Caco-2 (cell line): ENCODE measurements at regions of chr6 and their contacts with region 1.

Region 1: GRCh38 chr6:125220712-125221111 is 67.1 kb downstream of the TPD52L1 start:
- DNase-seq: no peak
- H3K4me3 ChIP-seq: peak overlapping the region; percentile 4
- H3K4me3 Mint-ChIP-seq: peak overlapping the region; percentile 25
- H3K27ac Mint-ChIP-seq: no peak overlapping the region
- H3K4me1 ChIP-seq: peaks cover 24% of the 10 kb centered on the region
- H3K4me1 Mint-ChIP-seq: peaks cover 30% of the 10 kb centered on the region
- H3K27me3 ChIP-seq: no peaks in the 10 kb centered on the region
- H3K27me3 Mint-ChIP-seq: no peaks in the 10 kb centered on the region
- CTCF ChIP-seq: no peak

Region 2: GRCh38 chr6:124984668-124985338 is 235.9 kb before region 1 on chr6:
- CTCF ChIA-PET with region 1: no interaction called
- POLR2A ChIA-PET with region 1: no interaction called
- intact Hi-C with region 1: no loop called
- DNase-seq: no peak
- H3K4me3 ChIP-seq: no peak overlapping the region
- H3K4me3 Mint-ChIP-seq: no peak overlapping the region
- H3K27ac Mint-ChIP-seq: no peak overlapping the region
- H3K4me1 ChIP-seq: no peaks in the 10 kb centered on the region
- H3K4me1 Mint-ChIP-seq: no peaks in the 10 kb centered on the region
- H3K27me3 ChIP-seq: no peaks in the 10 kb centered on the region
- H3K27me3 Mint-ChIP-seq: no peaks in the 10 kb centered on the region
- CTCF ChIP-seq: no peak

Region 3: DNA sequence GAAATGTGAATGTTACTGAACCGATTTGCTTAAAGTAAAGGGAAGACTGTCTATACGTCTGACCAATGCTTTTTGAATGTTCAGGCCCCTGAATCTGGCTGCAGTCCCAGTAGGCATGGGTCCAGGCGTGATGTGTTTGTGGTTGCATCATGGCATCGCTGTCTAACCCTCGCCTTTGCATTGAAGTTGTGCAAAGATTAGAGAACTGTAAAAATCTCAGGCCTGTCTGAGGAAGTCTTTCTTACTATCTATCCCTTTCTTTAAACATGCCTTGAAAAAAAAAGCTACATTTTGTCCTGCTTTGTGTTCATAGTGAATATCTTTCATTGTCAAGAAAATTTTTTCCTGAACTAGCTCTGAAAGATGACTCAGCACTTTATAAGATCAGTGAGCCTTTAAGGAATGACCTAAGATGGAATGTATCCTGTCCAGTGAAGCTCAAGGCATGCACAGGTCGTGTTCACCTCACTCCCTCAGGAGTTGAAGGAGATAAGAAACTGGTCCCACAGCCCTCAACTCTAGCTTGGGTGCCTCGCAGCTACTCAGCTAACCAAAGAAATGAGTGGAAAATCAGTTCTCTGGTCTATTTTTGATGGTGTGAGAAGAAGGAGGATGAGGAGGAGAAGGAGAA is 18.6 kb before region 1 on chr6:
- CTCF ChIA-PET with region 1: no interaction called
- POLR2A ChIA-PET with region 1: interaction called, 3 read pairs
- intact Hi-C with region 1: loop called (anchors 1 kb)
- DNase-seq: peak; percentile 59 to 81
- H3K4me3 ChIP-seq: no peak overlapping the region
- H3K4me3 Mint-ChIP-seq: peak overlapping the region; percentile 25
- H3K27ac Mint-ChIP-seq: peak overlapping the region; percentile 55
- H3K4me1 ChIP-seq: peaks cover 36% of the 10 kb centered on the region
- H3K4me1 Mint-ChIP-seq: peaks cover 25% of the 10 kb centered on the region
- H3K27me3 ChIP-seq: no peaks in the 10 kb centered on the region
- H3K27me3 Mint-ChIP-seq: no peaks in the 10 kb centered on the region
- CTCF ChIP-seq: no peak

Region 4: DNA sequence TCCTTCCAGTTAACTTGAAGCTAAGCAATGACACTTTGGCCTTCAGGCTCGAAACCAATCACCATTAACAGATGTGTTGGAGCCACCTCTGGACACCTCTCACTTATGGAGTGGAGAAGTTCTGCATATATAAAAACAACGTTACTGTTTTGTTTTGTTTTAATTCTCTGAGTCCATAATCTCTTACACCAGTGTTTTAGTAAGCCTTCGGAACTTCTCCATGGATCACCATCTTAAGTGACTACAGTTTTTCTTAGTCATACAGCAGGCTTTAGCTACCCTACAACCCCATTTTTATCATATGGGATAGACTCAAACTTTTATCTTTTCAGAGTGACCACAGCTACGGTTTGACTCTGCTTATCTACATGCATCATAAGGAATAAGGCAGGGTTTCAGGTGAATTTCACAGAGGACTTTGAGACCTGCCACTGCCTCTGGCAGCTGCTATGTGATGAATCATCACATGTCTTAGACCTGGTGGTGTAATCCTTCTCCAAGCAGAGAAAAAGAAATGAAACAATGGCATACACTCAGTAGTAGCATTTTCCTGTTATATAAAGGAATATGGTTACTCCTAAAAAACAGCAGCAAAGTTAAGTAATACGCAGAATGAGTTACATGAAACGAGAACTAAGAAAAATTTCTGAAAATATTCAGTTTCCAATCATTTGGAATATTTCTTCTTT is 86.6 kb after region 1 on chr6:
- CTCF ChIA-PET with region 1: no interaction called
- POLR2A ChIA-PET with region 1: no interaction called
- intact Hi-C with region 1: loop called (anchors 5 kb)
- DNase-seq: peak; percentile 61 to 69
- H3K4me3 ChIP-seq: no peak overlapping the region
- H3K4me3 Mint-ChIP-seq: peak overlapping the region; percentile 28
- H3K27ac Mint-ChIP-seq: peak overlapping the region; percentile 37
- H3K4me1 ChIP-seq: peaks cover 31% of the 10 kb centered on the region
- H3K4me1 Mint-ChIP-seq: peaks cover 24% of the 10 kb centered on the region
- H3K27me3 ChIP-seq: no peaks in the 10 kb centered on the region
- H3K27me3 Mint-ChIP-seq: no peaks in the 10 kb centered on the region
- CTCF ChIP-seq: no peak